Left colon (tissue), 2 donors: ENCODE measurements at regions of chr11 and their contacts with region 1.

Region 1: GRCh38 chr11:119481021-119481666 is 58.2 kb upstream of the THY1 start:
- DNase-seq: peak; percentile 64 to 81
- ATAC-seq: peak; percentile 94

Region 2: DNA sequence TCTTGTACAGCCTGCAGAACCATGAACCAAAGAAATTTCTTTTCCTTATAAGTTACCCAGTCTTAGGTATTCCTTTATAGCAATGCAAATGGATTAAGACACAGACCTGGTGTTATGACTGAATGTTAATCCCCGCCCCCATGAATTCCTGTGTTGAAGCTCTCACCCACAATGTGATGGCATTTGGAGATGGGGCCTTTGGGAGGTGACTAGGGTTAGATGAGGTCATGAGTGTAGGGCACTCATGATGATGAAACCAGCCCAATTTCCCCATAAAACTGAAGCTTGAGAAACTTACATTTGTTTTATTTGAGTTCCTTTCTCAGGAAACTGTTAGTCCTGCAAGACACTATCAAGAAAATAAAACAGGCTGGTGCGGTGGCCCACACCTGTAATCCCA is 57.6 kb after region 1 on chr11:
- intact Hi-C with region 1: loop called in 1 of 2 experiments (anchors 5 kb)
- DNase-seq: no peak
- ATAC-seq: no peak

Region 3: GRCh38 chr11:120108154-120108865 is 627.2 kb after region 1 on chr11:
- intact Hi-C with region 1: loop called in 1 of 2 experiments (anchors 5 kb)
- DNase-seq: peak in 1 of 2 donors; percentile 75
- ATAC-seq: peak; percentile 95